IMR-90 (cell line): ENCODE measurements at regions of chr6 and their contacts with region 1.

Region 1: DNA sequence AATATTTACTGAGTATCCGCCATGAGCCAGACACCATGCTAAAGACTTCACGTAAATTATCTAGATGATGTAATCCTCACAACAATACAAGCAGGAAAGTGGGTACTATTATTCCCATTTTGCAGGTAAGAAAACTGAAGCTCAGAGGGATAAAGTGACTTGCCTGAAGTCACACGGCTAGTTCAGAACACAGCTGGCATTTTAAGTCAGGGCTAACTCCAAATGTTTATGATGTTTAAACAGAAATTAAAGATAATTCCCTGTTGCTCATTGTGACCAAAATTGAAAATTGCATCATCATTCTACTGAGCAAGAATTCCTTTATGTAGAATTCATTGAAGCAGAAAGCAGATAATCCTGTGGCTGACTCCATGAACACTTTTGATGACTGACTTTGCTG is 71.3 kb upstream of the STXBP5 start:
- DNase-seq: peak; percentile 62
- ATAC-seq: no peak
- H3K4me3 ChIP-seq: no peak overlapping the region
- H3K27ac ChIP-seq: no peak overlapping the region
- H3K4me1 ChIP-seq: no peaks in the 10 kb centered on the region; the same call in 1 of the 2 replicates
- H3K27me3 ChIP-seq: no peaks in the 10 kb centered on the region
- CTCF ChIP-seq: no peak
- POLR2A ChIP-seq: no peak
- RAD21 ChIP-seq: no peak

Region 2: DNA sequence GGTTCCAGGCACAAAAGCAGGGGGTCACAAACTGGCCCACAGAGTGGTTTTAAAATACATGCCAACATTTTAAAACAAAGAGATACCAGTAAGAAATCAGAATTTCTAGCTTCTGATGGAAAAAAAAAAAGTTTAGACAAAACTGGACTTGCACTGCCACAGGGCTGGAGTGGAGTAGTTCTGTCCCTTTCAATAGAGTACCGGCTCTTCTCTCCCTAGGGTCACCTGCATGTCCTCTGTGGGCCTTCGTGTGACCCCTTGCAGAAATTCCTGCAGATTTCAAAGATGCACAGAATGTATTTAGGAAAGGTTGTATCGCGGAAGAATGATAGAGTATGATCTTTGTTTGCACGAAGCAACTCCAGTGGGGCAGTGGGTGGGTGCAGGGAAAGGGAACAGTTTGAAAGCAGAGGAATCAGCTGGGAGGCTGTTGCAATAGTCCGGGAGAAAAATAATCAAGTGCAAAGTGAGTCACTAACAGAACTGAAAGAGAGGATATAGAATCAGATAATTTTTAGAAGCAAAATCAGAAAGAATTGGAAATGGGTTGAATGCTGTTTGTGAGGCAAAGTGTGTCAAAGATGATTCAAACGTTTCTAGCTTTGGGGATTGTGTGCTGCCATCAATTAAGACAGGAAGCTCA is 26.0 kb before region 1 on chr6:
- CTCF ChIA-PET with region 1: no interaction called
- POLR2A ChIA-PET with region 1: interaction called, 12 read pairs
- dilution Hi-C with region 1: no loop called
- in situ Hi-C with region 1: no loop called
- intact Hi-C with region 1: no loop called
- DNase-seq: peak; percentile 83
- ATAC-seq: peak; percentile 95
- H3K4me3 ChIP-seq: peak overlapping the region; percentile 25; the same call in 1 of the 2 replicates
- H3K27ac ChIP-seq: peak overlapping the region; percentile 95
- H3K4me1 ChIP-seq: peaks cover 1% of the 10 kb centered on the region; the same call in 1 of the 2 replicates
- H3K27me3 ChIP-seq: no peaks in the 10 kb centered on the region
- CTCF ChIP-seq: no peak
- POLR2A ChIP-seq: no peak
- RAD21 ChIP-seq: no peak; the same call in 1 of the 2 replicates